ENCODE measurements at regions of chr13 and their contacts with region 1.

Region 1: GRCh38 chr13:22929381-22930126 is 251.2 kb upstream of the SGCG start:
- DNase-seq: no peak
- ATAC-seq: no peak
- H3K4me3 ChIP-seq: no peak overlapping the region
- H3K27ac ChIP-seq: no peak overlapping the region
- H3K4me1 ChIP-seq: no peaks in the 10 kb centered on the region
- H3K27me3 ChIP-seq: peaks cover 0 to 9% (median 0%) of the 10 kb centered on the region in 3 donors
- CTCF ChIP-seq: no peak

Region 2: GRCh38 chr13:22748866-22749577 is 180.5 kb before region 1 on chr13:
- intact Hi-C with region 1: no loop called
- DNase-seq: no peak
- ATAC-seq: no peak
- H3K4me3 ChIP-seq: no peak overlapping the region
- H3K27ac ChIP-seq: no peak overlapping the region
- H3K4me1 ChIP-seq: no peaks in the 10 kb centered on the region
- H3K27me3 ChIP-seq: no peaks in the 10 kb centered on the region
- CTCF ChIP-seq: no peak

Region 3: DNA sequence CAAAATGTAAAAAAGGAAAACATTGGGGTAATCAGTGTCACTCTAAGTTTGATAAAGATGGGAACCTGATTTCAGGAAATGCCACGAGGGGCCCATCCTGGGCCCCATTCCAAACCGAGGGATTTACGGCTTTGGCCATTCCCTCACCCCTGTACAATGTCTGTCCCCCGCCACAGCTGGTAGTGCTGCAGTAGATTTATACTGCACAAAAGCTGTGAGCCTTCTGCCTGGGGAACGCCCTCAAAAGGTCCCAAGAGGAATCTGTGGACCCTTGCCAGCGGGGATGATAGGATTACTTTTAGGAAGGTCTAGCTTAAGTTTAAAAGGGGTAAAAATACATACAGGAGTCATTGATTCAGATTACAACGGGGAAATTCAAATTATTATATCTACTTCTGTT is 77.9 kb after region 1 on chr13:
- intact Hi-C with region 1: no loop called
- DNase-seq: no peak
- ATAC-seq: no peak
- H3K4me3 ChIP-seq: no peak overlapping the region
- H3K27ac ChIP-seq: no peak overlapping the region
- H3K4me1 ChIP-seq: no peaks in the 10 kb centered on the region
- H3K27me3 ChIP-seq: no peaks in the 10 kb centered on the region
- CTCF ChIP-seq: no peak

Region 4: DNA sequence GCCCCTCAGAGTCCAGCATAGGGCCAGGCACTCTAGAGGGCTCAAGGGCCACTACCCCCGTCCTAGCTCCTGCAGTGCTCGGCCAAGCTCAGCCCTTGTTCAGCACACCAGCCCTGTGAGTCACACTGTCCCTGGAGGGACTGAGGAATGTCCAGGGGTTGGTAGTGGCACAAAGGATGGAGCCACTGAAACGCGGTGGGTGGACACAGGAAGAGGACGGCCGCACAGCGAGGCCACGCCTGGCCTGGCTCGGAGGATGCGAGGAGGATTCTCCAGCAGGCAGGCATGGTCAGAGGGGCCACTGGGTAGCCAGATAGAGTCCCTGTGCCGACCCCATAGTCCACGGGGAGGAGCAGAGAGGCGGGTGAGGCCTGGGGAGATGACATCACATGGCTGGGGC is 1425.5 kb after region 1 on chr13:
- intact Hi-C with region 1: loop called (anchors 5 to 10 kb)
- DNase-seq: no peak
- ATAC-seq: no peak
- H3K4me3 ChIP-seq: no peak overlapping the region
- H3K27ac ChIP-seq: no peak overlapping the region
- H3K4me1 ChIP-seq: no peaks in the 10 kb centered on the region
- H3K27me3 ChIP-seq: no peaks in the 10 kb centered on the region
- CTCF ChIP-seq: no peak

Measured in psoas muscle (tissue), 8 donors.